ENCODE measurements at regions of chr11 and their contacts with region 1.

Region 1: DNA sequence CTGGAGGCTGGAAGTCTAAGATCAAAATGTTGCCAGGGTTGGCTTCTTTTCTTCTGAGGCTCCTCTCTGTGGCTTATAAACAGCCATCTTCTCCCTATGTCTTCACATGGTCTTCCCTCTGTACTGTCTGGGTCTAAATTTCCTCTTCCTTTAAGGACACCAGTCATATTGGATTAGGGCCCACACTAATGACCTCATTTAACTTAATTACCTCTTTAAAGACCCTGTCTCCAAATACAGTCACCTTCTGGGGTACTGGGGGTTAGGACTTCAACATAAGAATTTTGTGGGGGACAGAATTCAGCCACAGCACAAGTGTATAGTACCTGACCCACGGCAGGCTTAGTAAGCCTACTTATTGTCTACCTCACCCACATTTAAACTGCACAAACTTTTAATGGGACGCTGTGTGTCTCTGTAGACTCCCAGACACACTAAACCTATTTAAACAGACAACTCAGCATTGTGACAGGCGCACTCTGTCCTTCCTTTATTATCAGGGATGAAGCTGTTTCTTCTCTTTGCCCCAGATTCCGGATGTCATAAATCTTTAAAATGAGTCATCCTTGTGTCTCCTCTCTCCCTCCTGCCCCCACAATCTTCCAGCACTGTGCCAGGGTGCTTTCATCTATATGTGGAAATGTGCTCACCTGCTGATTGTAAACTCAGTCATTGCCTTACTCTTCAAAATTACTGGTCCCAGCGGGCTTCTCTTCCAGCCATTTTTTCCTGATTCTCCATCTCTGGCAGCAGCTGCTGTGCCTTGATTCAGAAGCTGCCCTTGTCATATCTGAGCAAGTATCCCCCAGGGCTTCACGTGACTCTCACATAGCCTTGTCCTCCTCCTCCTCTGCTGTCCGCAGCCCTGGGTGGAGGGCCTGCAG is 5.4 kb upstream of the MAPK8IP1 start:
- DNase-seq: no peak
- H3K4me3 ChIP-seq: no peak overlapping the region
- H3K27ac ChIP-seq: peak overlapping the region; percentile 5 to 74 (median 48)
- H3K4me1 ChIP-seq: peaks cover 0 to 29% (median 27%) of the 10 kb centered on the region in 4 donors
- H3K27me3 ChIP-seq: no peaks in the 10 kb centered on the region
- CTCF ChIP-seq: no peak
- EP300 ChIP-seq: peak in 1 of 4 donors; percentile 39
- POLR2A ChIP-seq: no peak

Region 2: GRCh38 chr11:45859661-45860140 is 20.3 kb before region 1 on chr11:
- intact Hi-C with region 1: loop called (anchors 2 kb)
- DNase-seq: peak; percentile 99
- H3K4me3 ChIP-seq: no peak overlapping the region
- H3K27ac ChIP-seq: peak overlapping the region; percentile 81 to 99 (median 88)
- H3K4me1 ChIP-seq: peaks cover 0 to 69% (median 67%) of the 10 kb centered on the region in 4 donors
- H3K27me3 ChIP-seq: no peaks in the 10 kb centered on the region
- CTCF ChIP-seq: no peak
- EP300 ChIP-seq: peak; percentile 67 to 96 (median 88)
- POLR2A ChIP-seq: no peak

Region 3: DNA sequence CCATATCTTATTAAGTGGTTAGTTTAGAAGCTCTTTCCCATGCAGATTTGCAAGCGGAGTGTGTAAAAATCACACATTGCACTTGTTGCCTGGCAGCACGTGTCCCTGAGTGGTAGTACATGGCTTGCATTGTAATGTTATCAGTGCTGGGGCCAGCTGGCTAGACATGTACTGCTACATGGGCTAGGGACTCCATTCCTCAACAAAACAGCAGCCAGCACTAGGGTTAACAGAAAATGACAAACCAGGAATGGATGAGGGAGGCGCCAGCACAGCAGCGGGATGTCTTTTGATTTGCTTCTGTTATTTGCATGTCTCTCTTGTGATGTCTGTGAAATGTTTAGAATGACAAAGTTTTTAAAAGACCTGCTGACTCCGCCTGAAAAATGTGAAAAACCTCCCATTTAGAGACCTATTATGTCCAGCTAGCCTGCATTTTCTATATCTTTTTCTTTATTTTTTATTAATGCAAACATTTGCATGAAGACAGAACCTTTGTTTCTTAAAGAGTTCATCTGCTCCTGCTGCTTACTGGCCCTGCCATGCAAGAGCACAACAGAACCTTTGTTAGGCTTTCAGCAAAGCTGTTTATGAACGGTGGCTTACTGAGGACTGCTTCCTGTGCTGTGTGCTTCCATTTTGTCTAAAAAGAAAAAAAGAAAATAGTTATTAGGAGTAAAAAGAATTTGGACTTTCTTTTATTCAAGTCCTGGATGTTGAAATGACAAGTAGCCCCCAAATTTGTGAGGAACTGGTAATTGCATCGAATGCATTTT is 1097.2 kb after region 1 on chr11:
- intact Hi-C with region 1: no loop called
- DNase-seq: no peak
- H3K4me3 ChIP-seq: no peak overlapping the region
- H3K27ac ChIP-seq: no peak overlapping the region
- H3K4me1 ChIP-seq: peaks cover 0 to 12% (median 3%) of the 10 kb centered on the region in 4 donors
- H3K27me3 ChIP-seq: no peaks in the 10 kb centered on the region
- CTCF ChIP-seq: no peak
- EP300 ChIP-seq: no peak
- POLR2A ChIP-seq: no peak

Measured in sigmoid colon (tissue), 7 donors.